ENCODE measurements at regions of chr2 and their contacts with region 1.

Region 1: GRCh38 chr2:27086090-27086723 is 365 bp upstream of the KHK start:
- DNase-seq: peak; percentile 98
- H3K4me3 ChIP-seq: peak overlapping the region; percentile 68 to 81 (median 72)
- H3K27ac ChIP-seq: peak overlapping the region; percentile 92 to 95 (median 93)
- H3K4me1 ChIP-seq: peaks cover 28 to 70% (median 62%) of the 10 kb centered on the region in 4 donors
- H3K27me3 ChIP-seq: no peaks in the 10 kb centered on the region
- CTCF ChIP-seq: peak; percentile 91 to 96 (median 96)
- EP300 ChIP-seq: no peak
- POLR2A ChIP-seq: peak; percentile 73

Region 2: DNA sequence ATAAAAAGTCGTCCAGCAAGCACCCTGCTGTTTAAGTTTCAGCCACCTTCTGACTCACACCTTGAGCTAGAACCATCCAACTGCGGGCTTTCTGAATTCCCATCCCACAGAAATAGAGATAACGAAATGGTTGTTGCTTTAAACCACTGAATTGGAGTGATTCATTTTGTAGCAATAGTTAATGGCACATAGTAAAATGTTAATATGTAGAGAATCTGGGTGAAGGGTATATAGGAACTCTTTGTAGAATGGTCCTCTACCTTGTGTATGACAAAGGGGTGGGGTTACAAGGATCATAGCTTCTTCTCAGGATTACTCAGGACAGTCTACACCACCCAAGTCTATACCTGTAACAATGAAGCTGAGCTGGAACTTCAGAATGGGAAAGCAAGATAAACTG is 118.2 kb before region 1 on chr2:
- intact Hi-C with region 1: loop called (anchors 5 kb)
- DNase-seq: no peak
- H3K4me3 ChIP-seq: no peak overlapping the region
- H3K27ac ChIP-seq: no peak overlapping the region
- H3K4me1 ChIP-seq: peaks cover 15 to 32% (median 27%) of the 10 kb centered on the region in 4 donors
- H3K27me3 ChIP-seq: no peaks in the 10 kb centered on the region
- CTCF ChIP-seq: no peak
- EP300 ChIP-seq: no peak
- POLR2A ChIP-seq: no peak

Region 3: GRCh38 chr2:27032495-27033252 is 53.5 kb before region 1 on chr2 and contains the start of gene TMEM214:
- intact Hi-C with region 1: loop called (anchors 5 kb)
- DNase-seq: peak; percentile 95
- H3K4me3 ChIP-seq: peak within 1 kb of the TSS; percentile 86 to 91 (median 88)
- H3K27ac ChIP-seq: peak within 1 kb of the TSS; percentile 78 to 87 (median 83)
- H3K4me1 ChIP-seq: peaks cover 15 to 42% (median 34%) of the 10 kb centered on the region in 4 donors
- H3K27me3 ChIP-seq: no peaks in the 10 kb centered on the region
- CTCF ChIP-seq: peak in 1 of 3 experiments; percentile 20
- EP300 ChIP-seq: no peak
- POLR2A ChIP-seq: peak; percentile 42
- total RNA-seq, gene TMEM214: 26.7 to 47.7 (median 35.3) TPM

Region 4: GRCh38 chr2:27715318-27716210 is 629.4 kb after region 1 on chr2:
- intact Hi-C with region 1: no loop called
- DNase-seq: no peak
- H3K4me3 ChIP-seq: peak overlapping the region; percentile 56 to 60 (median 59)
- H3K27ac ChIP-seq: peak overlapping the region; percentile 72 to 82 (median 79)
- H3K4me1 ChIP-seq: peaks cover 21 to 39% (median 31%) of the 10 kb centered on the region in 4 donors
- H3K27me3 ChIP-seq: no peaks in the 10 kb centered on the region
- CTCF ChIP-seq: no peak
- EP300 ChIP-seq: peak; percentile 49
- POLR2A ChIP-seq: peak; percentile 35

Measured in esophagus muscularis mucosa (tissue), 4 donors.